ENCODE measurements at regions of chr17 and their contacts with region 1.

Region 1: GRCh38 chr17:83080858-83081683 is 1.7 kb downstream of the METRNL start:
- DNase-seq: no peak
- H3K4me3 ChIP-seq: peak overlapping the region; percentile 56 to 74
- H3K27ac ChIP-seq: peak overlapping the region; percentile 86
- H3K4me1 ChIP-seq: peaks cover 68% of the 10 kb centered on the region
- H3K27me3 ChIP-seq: no peaks in the 10 kb centered on the region
- CTCF ChIP-seq: no peak
- POLR2A ChIP-seq: peak in 1 of 2 donors; percentile 37

Region 2: GRCh38 chr17:83051395-83052233 is 29.5 kb before region 1 on chr17:
- intact Hi-C with region 1: loop called (anchors 1 kb)
- DNase-seq: peak in 1 of 2 donors; percentile 98
- H3K4me3 ChIP-seq: peak overlapping the region; percentile 76 to 89
- H3K27ac ChIP-seq: peak overlapping the region; percentile 97
- H3K4me1 ChIP-seq: peaks cover 41% of the 10 kb centered on the region
- H3K27me3 ChIP-seq: no peaks in the 10 kb centered on the region
- CTCF ChIP-seq: peak in 2 of 3 experiments; percentile 1 to 9
- POLR2A ChIP-seq: peak in 1 of 2 donors; percentile 85